Head of caudate nucleus (tissue), 42 donors: ENCODE measurements at regions of chrX and their contacts with region 1.

Region 1: GRCh38 chrX:47218920-47219815 is 687 bp downstream of the CDK16 start:
- DNase-seq: peak in 29 of 42 donors; percentile 10 to 65 (median 29)

Region 2: GRCh38 chrX:47232801-47233336 is 13.7 kb after region 1 on chrX and contains the start of gene USP11:
- intact Hi-C with region 1: loop called (anchors 1 kb)
- DNase-seq: peak; percentile 17 to 83 (median 60)

Region 3: GRCh38 chrX:47530049-47530448 is 310.9 kb after region 1 on chrX:
- intact Hi-C with region 1: no loop called
- DNase-seq: no peak